Activated CD8-positive, alpha-beta T cell treated with anti-CD3 and anti-CD28 coated beads for 36 hours (primary cell): ENCODE measurements at regions of chr21 and their contacts with region 1.

Region 1: GRCh38 chr21:36325373-36326010 is 5.5 kb downstream of the MORC3 start:
- DNase-seq: no peak
- ATAC-seq: no peak
- H3K4me3 Mint-ChIP-seq: no peak overlapping the region
- H3K27ac Mint-ChIP-seq: peak overlapping the region; percentile 42
- H3K4me1 Mint-ChIP-seq: peaks cover 52% of the 10 kb centered on the region
- H3K27me3 Mint-ChIP-seq: no peaks in the 10 kb centered on the region
- CTCF ChIP-seq: no peak

Region 2: DNA sequence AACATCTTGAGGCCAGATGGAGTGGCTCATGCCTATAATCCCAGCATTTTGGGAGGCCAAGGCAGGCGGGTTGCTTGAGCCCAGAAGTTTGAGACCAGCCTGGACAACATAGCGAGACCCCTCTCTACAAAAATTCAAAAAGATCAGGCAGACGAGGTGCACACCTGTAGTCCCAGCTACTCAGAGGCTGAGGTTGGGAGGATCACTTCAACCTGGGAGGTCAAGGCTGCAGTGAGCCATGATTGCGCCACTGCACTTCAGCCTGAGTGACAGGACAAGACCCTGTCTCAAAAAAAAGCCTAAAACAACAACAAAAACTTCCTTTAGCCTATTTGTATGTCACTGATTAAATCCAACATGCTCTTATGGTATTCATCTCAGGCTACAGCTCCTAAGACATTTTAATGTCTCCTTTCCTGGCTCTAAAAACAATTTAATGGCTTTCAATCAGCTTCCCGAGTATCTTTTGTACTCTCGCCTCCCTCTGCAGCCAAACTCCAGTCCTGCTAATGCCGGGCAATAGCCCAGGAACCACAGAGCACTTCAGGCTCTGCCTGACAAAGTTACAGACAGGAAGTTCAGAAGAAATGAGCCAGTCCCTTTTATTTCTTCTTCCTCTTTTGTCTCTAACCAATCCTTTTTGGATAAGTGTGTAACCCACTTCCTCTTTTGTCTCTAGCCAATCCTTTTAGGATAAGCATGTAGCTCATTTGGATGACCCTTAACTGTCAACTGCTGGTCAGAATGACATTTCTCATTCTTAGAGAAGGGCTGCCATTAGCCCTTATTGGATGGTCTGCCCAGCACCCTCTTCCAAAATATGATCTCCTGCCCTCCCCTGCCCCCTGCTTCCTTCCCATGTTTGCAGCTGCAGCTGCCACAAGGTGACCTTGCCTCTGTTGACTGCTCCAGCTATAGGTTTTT is 175.4 kb before region 1 on chr21:
- CTCF ChIA-PET with region 1: interaction called, 3 read pairs
- POLR2A ChIA-PET with region 1: interaction called, 4 read pairs
- intact Hi-C with region 1: loop called (anchors 5 kb)
- DNase-seq: no peak
- ATAC-seq: peak; percentile 39
- H3K4me3 Mint-ChIP-seq: no peak overlapping the region
- H3K27ac Mint-ChIP-seq: peak overlapping the region; percentile 74
- H3K4me1 Mint-ChIP-seq: peaks cover 24% of the 10 kb centered on the region
- H3K27me3 Mint-ChIP-seq: no peaks in the 10 kb centered on the region
- CTCF ChIP-seq: no peak